ENCODE measurements at regions of chr9 and their contacts with region 1.

Region 1: GRCh38 chr9:14768405-14769229 is 46.1 kb upstream of the CER1 start:
- DNase-seq: no peak
- ATAC-seq: no peak
- H3K4me3 Mint-ChIP-seq: no peak overlapping the region
- H3K27ac Mint-ChIP-seq: no peak overlapping the region
- H3K4me1 Mint-ChIP-seq: no peaks in the 10 kb centered on the region
- H3K27me3 Mint-ChIP-seq: peaks cover 12% of the 10 kb centered on the region
- CTCF ChIP-seq: peak; percentile 83

Region 2: DNA sequence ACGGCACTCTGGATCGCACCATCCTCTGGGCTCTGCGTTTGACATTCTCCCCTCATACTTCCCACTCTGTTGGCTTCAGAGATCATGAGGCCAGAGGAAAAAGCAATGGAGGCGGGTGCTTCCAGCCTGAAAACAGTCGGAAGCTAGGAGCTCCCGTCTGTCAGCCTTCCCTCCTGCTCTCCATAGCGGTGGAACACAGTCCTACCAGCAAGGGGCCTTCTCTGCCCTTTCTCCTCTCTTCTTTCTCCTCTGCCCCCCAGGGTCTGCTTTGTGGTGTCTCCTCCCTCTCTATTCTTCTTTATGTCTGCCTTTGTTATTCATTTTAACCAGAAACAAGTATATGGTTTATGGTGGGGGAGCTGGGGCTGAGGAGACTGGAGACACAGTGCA is 302.2 kb before region 1 on chr9:
- CTCF ChIA-PET with region 1: interaction called, 5 read pairs
- POLR2A ChIA-PET with region 1: no interaction called
- intact Hi-C with region 1: loop called (anchors 5 kb)
- DNase-seq: no peak
- ATAC-seq: no peak
- H3K4me3 Mint-ChIP-seq: no peak overlapping the region
- H3K27ac Mint-ChIP-seq: no peak overlapping the region
- H3K4me1 Mint-ChIP-seq: no peaks in the 10 kb centered on the region
- H3K27me3 Mint-ChIP-seq: no peaks in the 10 kb centered on the region
- CTCF ChIP-seq: no peak

Region 3: GRCh38 chr9:14616188-14616982 is 152.2 kb before region 1 on chr9:
- CTCF ChIA-PET with region 1: interaction called, 22 read pairs
- POLR2A ChIA-PET with region 1: no interaction called
- intact Hi-C with region 1: loop called (anchors 1 kb)
- DNase-seq: no peak
- ATAC-seq: peak; percentile 51
- H3K4me3 Mint-ChIP-seq: no peak overlapping the region
- H3K27ac Mint-ChIP-seq: no peak overlapping the region
- H3K4me1 Mint-ChIP-seq: no peaks in the 10 kb centered on the region
- H3K27me3 Mint-ChIP-seq: no peaks in the 10 kb centered on the region
- CTCF ChIP-seq: peak; percentile 72

Region 4: DNA sequence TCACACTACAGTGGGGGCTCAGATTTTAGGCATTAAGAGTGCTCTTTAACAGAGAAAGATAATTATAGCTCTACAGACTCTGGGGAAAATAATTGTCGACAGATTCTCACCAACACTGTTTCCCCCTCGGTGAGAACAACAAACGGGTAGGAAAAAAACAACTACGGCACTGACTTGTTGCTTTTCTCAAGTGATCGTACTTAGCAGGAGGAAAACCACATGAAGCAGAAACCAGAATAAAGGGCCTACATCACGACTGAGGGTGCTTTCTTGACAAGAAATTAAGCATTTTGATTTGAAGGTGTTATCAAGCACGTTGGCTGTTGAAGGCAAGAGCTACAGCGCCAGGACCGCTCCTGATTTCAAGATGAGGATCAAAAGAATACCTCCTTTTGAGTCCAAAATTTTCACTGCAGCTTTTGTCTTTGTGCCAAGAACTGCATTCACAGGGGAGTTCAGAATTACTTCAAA is 18.8 kb before region 1 on chr9:
- CTCF ChIA-PET with region 1: interaction called, 11 read pairs
- POLR2A ChIA-PET with region 1: no interaction called
- intact Hi-C with region 1: no loop called
- DNase-seq: no peak
- ATAC-seq: no peak
- H3K4me3 Mint-ChIP-seq: no peak overlapping the region
- H3K27ac Mint-ChIP-seq: no peak overlapping the region
- H3K4me1 Mint-ChIP-seq: peaks cover 5% of the 10 kb centered on the region
- H3K27me3 Mint-ChIP-seq: peaks cover 14% of the 10 kb centered on the region
- CTCF ChIP-seq: no peak

Measured in activated CD8-positive, alpha-beta T cell treated with anti-CD3 and anti-CD28 coated beads for 36 hours (primary cell).